Calu3 (cell line): ENCODE measurements at regions of chr18 and their contacts with region 1.

Region 1: GRCh38 chr18:53864770-53865169 is 359.7 kb downstream of the MBD2 start:
- DNase-seq: no peak
- H3K4me3 Mint-ChIP-seq: no peak overlapping the region
- H3K27ac Mint-ChIP-seq: no peak overlapping the region
- H3K4me1 Mint-ChIP-seq: no peaks in the 10 kb centered on the region
- H3K27me3 Mint-ChIP-seq: no peaks in the 10 kb centered on the region
- CTCF ChIP-seq: no peak

Region 2: DNA sequence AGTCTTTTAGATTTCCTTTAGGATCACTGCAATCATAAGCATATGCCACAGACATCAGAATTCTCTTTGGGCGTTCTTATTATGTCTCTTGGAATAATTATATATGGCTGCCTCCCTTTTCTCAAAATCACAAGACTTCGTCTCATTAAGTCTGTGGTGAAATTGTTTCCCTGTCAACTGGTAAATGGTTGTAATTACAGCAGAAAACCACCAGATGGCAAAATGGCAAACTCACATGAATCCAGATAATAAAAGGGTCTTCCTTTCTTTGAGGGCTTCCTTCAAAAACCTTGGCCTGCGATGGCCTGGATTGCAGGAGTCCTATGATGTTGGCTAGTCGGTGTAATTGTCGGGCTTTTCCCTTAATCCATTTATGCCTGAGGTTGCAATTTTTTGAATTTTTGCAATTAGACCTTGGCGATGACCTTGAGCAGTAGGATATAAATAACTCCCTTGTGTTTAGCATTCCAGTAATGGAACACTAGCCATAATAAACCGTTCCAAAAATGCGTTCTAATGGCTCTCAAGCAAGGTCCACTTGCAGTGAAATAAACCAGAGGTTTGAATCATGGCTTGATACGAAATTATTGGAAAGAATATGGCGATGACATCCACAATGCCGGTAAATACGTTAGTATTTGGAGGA is 296.7 kb before region 1 on chr18:
- CTCF ChIA-PET with region 1: no interaction called
- intact Hi-C with region 1: loop called (anchors 10 kb)
- DNase-seq: no peak
- H3K4me3 Mint-ChIP-seq: no peak overlapping the region
- H3K27ac Mint-ChIP-seq: no peak overlapping the region
- H3K4me1 Mint-ChIP-seq: no peaks in the 10 kb centered on the region
- H3K27me3 Mint-ChIP-seq: no peaks in the 10 kb centered on the region
- CTCF ChIP-seq: peak; percentile 38

Region 3: DNA sequence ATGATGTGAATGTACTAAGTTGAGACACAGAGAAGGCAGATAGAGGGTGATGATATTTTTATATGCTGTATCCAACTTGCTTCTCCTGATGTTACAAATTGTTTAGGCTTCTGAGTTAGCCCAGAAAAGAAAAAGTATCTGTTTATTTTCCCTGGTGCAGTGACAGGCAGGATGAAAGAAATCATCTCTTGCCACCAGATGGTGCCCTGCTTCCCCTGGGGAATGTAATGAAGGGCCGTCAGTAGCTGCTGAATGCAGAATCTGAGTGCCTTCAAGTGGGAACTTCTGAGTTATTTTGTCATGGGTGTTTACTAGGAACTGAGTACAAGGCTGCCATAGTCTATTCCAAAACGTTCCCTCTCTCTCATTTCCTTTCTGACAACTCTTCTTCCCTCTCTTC is 165.9 kb before region 1 on chr18:
- CTCF ChIA-PET with region 1: no interaction called
- intact Hi-C with region 1: loop called (anchors 1 kb)
- DNase-seq: peak; percentile 30
- H3K4me3 Mint-ChIP-seq: no peak overlapping the region
- H3K27ac Mint-ChIP-seq: no peak overlapping the region
- H3K4me1 Mint-ChIP-seq: no peaks in the 10 kb centered on the region
- H3K27me3 Mint-ChIP-seq: no peaks in the 10 kb centered on the region
- CTCF ChIP-seq: peak; percentile 28

Region 4: GRCh38 chr18:54209471-54210180 is 344.9 kb after region 1 on chr18:
- CTCF ChIA-PET with region 1: no interaction called
- intact Hi-C with region 1: no loop called
- DNase-seq: no peak
- H3K4me3 Mint-ChIP-seq: no peak overlapping the region
- H3K27ac Mint-ChIP-seq: no peak overlapping the region
- H3K4me1 Mint-ChIP-seq: peaks cover 42% of the 10 kb centered on the region
- H3K27me3 Mint-ChIP-seq: no peaks in the 10 kb centered on the region
- CTCF ChIP-seq: no peak

Region 5: GRCh38 chr18:54316071-54316820 is 451.5 kb after region 1 on chr18:
- CTCF ChIA-PET with region 1: no interaction called
- intact Hi-C with region 1: no loop called
- DNase-seq: no peak
- H3K4me3 Mint-ChIP-seq: no peak overlapping the region
- H3K27ac Mint-ChIP-seq: no peak overlapping the region
- H3K4me1 Mint-ChIP-seq: no peaks in the 10 kb centered on the region
- H3K27me3 Mint-ChIP-seq: no peaks in the 10 kb centered on the region
- CTCF ChIP-seq: no peak